Activated CD4-positive, alpha-beta T cell treated with anti-CD3 and anti-CD28 coated beads for 36 hours (primary cell): ENCODE measurements at regions of chr2 and their contacts with region 1.

Region 1: GRCh38 chr2:157413326-157414035 is 30.4 kb downstream of the CYTIP start:
- DNase-seq: peak; percentile 64
- ATAC-seq: peak; percentile 67
- H3K4me3 Mint-ChIP-seq: peak overlapping the region; percentile 63
- H3K27ac Mint-ChIP-seq: peak overlapping the region; percentile 100
- H3K4me1 Mint-ChIP-seq: peaks cover 89% of the 10 kb centered on the region
- H3K27me3 Mint-ChIP-seq: no peaks in the 10 kb centered on the region

Region 2: DNA sequence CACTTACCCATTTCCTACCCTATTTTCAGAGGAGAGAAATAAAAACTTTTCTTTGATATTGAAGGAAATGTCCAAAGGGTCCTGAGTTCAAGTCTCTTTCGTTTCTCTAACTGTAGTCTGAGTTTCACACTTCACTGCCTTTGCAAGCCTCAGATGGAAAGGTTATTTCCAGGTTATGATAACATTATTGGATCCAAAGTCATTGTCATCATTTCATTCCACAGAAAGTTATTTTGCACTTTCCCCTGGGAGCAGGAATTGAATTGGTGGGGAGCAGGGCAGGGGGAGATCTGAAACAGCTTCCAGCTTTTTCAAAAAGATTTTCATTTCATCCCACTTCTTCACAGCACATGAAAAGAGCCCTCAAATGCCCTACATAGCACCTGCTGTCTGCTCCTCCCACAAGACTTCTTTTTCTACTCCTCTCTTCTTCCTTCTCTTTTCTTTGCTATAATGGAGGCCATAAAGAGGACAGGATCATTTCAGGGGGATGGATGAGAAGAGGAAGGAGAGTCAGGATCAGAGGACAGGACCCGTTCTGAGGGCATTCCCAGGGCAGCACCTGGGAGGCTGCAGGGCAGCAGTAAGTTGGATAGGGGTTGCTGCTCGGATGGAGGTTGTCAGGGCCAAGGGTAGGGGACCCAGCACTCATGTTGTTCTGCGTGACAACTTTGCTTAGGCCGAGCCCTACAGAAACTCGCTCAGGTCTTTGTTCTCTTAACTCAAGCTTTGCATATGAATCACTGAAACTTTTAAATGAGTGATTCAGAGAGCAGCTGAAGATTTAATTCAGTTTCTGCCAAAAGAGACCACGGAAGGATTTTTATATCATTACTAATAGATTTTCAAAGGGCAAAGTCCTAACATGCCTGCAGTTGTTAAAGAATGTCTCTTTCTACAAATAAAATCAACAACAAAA is 167.4 kb before region 1 on chr2:
- CTCF ChIA-PET with region 1: no interaction called
- POLR2A ChIA-PET with region 1: no interaction called
- intact Hi-C with region 1: no loop called
- DNase-seq: peak; percentile 63
- ATAC-seq: peak; percentile 100
- H3K4me3 Mint-ChIP-seq: no peak overlapping the region
- H3K27ac Mint-ChIP-seq: peak overlapping the region; percentile 62
- H3K4me1 Mint-ChIP-seq: peaks cover 24% of the 10 kb centered on the region
- H3K27me3 Mint-ChIP-seq: peaks cover 18% of the 10 kb centered on the region

Region 3: GRCh38 chr2:157480182-157480961 is 66.9 kb after region 1 on chr2:
- CTCF ChIA-PET with region 1: interaction called, 5 read pairs
- POLR2A ChIA-PET with region 1: interaction called, 25 read pairs
- intact Hi-C with region 1: loop called (anchors 1 kb)
- DNase-seq: peak; percentile 81
- ATAC-seq: peak; percentile 71
- H3K4me3 Mint-ChIP-seq: peak overlapping the region; percentile 64
- H3K27ac Mint-ChIP-seq: peak overlapping the region; percentile 95
- H3K4me1 Mint-ChIP-seq: peaks cover 86% of the 10 kb centered on the region
- H3K27me3 Mint-ChIP-seq: no peaks in the 10 kb centered on the region

Region 4: GRCh38 chr2:157784169-157784822 is 370.8 kb after region 1 on chr2:
- CTCF ChIA-PET with region 1: no interaction called
- POLR2A ChIA-PET with region 1: no interaction called
- intact Hi-C with region 1: no loop called
- DNase-seq: peak; percentile 42
- ATAC-seq: peak; percentile 71
- H3K4me3 Mint-ChIP-seq: no peak overlapping the region
- H3K27ac Mint-ChIP-seq: peak overlapping the region; percentile 51
- H3K4me1 Mint-ChIP-seq: peaks cover 49% of the 10 kb centered on the region
- H3K27me3 Mint-ChIP-seq: no peaks in the 10 kb centered on the region